ENCODE measurements at regions of chr1 and their contacts with region 1.

Region 1: GRCh38 chr1:176897350-176898236 is 266.9 kb downstream of the ASTN1 start:
- DNase-seq: peak in 5 of 6 donors; percentile 42 to 81 (median 63)
- ATAC-seq: peak; percentile 67 to 93 (median 86)
- H3K4me3 ChIP-seq: no peak overlapping the region
- H3K27ac ChIP-seq: no peak overlapping the region
- H3K4me1 ChIP-seq: peaks cover 0 to 4% (median 0%) of the 10 kb centered on the region in 3 donors
- H3K27me3 ChIP-seq: peaks cover 0 to 3% (median 0%) of the 10 kb centered on the region in 4 donors
- CTCF ChIP-seq: peak; percentile 52 to 61 (median 54)

Region 2: DNA sequence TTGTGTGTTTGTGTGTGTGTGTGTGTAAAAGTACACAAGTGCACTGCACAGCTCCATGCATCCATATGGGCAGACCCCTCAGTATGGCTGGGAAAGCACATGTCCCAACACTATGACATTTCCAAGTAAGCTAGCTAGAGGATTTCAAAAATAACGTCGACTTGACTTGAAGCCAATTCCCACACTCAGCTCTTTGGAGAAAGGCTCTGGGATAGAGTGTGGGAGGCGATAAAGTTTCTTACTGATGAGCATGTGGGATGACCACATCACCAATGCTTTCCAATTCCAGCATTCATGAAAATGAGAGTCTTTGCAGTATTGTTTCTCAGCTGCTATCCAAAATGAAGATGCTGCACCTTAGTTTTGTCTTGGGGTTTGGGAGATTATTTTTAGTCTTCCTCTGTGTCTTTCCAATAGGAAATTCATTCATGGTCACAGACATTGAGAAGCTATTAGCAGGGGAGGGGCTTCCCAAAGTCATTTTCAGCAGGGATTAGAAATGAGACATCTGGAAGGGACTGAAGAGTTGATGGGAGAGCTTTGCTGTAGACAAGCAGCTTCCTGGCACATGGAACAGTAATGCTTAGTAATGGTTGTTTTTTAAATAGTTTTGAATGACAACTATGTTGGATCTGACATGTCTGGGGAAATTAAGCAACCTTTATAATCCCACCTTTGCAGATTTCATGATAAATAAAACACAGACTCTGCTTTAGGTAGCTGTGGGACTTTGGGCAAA is 123.4 kb after region 1 on chr1:
- intact Hi-C with region 1: no loop called
- DNase-seq: no peak
- ATAC-seq: peak in 1 of 4 donors; percentile 35
- H3K4me3 ChIP-seq: no peak overlapping the region
- H3K27ac ChIP-seq: no peak overlapping the region
- H3K4me1 ChIP-seq: no peaks in the 10 kb centered on the region
- H3K27me3 ChIP-seq: no peaks in the 10 kb centered on the region
- CTCF ChIP-seq: no peak

Region 3: GRCh38 chr1:177181631-177182291 is 284.2 kb after region 1 on chr1:
- intact Hi-C with region 1: loop called in 1 of 3 experiments (anchors 10 kb)
- DNase-seq: peak; percentile 27 to 83 (median 64)
- ATAC-seq: peak; percentile 81 to 99 (median 96)
- H3K4me3 ChIP-seq: peak overlapping the region in 1 of 4 donors; percentile 17
- H3K27ac ChIP-seq: no peak overlapping the region
- H3K4me1 ChIP-seq: peaks cover 0 to 3% (median 0%) of the 10 kb centered on the region in 3 donors
- H3K27me3 ChIP-seq: peaks cover 0 to 5% (median 0%) of the 10 kb centered on the region in 4 donors
- CTCF ChIP-seq: peak; percentile 72 to 83 (median 79)

Region 4: DNA sequence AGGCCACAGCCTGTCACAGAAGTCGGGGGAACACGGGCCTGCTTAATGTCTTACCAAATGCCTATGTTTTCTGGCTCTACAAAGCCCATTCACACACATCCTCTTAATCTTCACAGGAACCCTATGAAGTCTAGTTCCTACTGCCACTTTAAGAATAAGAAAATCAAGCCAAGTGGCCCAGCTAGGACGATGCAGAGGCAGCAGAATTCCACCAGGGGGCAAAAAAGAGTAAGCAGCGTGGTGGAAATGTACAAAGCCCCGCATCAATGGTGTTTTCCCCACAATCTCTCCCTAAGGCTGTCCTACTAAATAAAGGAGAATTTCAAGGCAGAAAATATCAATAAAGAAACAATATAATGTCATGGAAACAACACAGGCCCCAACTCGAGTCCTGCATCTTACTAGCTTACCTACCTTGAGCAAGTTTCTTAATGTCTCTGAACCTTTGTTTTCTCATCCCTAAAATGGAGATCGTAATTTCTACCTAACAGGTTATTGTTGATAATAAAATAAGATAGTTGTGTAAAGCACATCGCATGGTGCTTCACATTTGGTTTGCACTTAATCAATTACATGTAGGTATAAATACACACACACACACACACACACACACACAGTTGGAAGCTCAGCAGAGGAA is 1050.9 kb after region 1 on chr1:
- intact Hi-C with region 1: loop called in 2 of 3 experiments (anchors 5 to 10 kb)
- DNase-seq: peak in 3 of 6 donors; percentile 35 to 72 (median 38)
- ATAC-seq: peak; percentile 82 to 89 (median 86)
- H3K4me3 ChIP-seq: no peak overlapping the region
- H3K27ac ChIP-seq: no peak overlapping the region
- H3K4me1 ChIP-seq: no peaks in the 10 kb centered on the region
- H3K27me3 ChIP-seq: no peaks in the 10 kb centered on the region
- CTCF ChIP-seq: peak; percentile 62 to 85 (median 76)

Measured in pancreas (tissue), 10 donors.